ENCODE measurements at regions of chr2 and their contacts with region 1.

Region 1: GRCh38 chr2:188089901-188090300 is 201.8 kb upstream of the GULP1 start:
- DNase-seq: no peak
- ATAC-seq: no peak
- H3K4me3 ChIP-seq: no peak overlapping the region
- H3K27ac ChIP-seq: no peak overlapping the region
- H3K4me1 ChIP-seq: no peaks in the 10 kb centered on the region
- H3K27me3 ChIP-seq: no peaks in the 10 kb centered on the region
- CTCF ChIP-seq: no peak
- EP300 ChIP-seq: no peak
- POLR2A ChIP-seq: no peak
- RAD21 ChIP-seq: no peak

Region 2: GRCh38 chr2:188256420-188256819 is 166.5 kb after region 1 on chr2:
- CTCF ChIA-PET with region 1: no interaction called
- POLR2A ChIA-PET with region 1: no interaction called
- in situ Hi-C with region 1: loop called (anchors 5 kb)
- intact Hi-C with region 1: no loop called
- DNase-seq: no peak
- ATAC-seq: no peak
- H3K4me3 ChIP-seq: no peak overlapping the region
- H3K27ac ChIP-seq: no peak overlapping the region
- H3K4me1 ChIP-seq: no peaks in the 10 kb centered on the region
- H3K27me3 ChIP-seq: no peaks in the 10 kb centered on the region
- CTCF ChIP-seq: no peak
- EP300 ChIP-seq: no peak
- POLR2A ChIP-seq: no peak
- RAD21 ChIP-seq: no peak

Region 3: DNA sequence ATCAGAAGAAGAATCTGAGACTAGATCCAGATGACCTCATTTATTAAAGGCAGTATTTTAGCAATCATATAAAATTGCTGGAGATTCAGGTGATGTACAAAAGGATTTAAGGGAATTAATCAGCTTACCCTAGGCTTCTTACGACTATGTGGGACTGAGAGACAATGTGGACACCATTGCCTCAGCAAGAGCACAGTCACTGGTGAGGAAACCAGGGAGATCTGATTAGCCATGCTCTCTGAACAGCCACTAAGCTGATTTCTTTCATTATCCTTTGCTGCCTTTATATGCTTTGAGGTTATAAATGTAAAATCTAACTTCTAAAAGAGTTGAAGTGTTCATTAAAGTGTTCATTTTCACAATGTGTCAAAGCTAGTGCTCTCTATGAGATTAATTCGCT is 179.1 kb after region 1 on chr2:
- CTCF ChIA-PET with region 1: no interaction called
- POLR2A ChIA-PET with region 1: no interaction called
- in situ Hi-C with region 1: loop called (anchors 5 kb)
- intact Hi-C with region 1: loop called (anchors 1 kb)
- DNase-seq: no peak
- ATAC-seq: no peak
- H3K4me3 ChIP-seq: no peak overlapping the region
- H3K27ac ChIP-seq: no peak overlapping the region
- H3K4me1 ChIP-seq: no peaks in the 10 kb centered on the region
- H3K27me3 ChIP-seq: no peaks in the 10 kb centered on the region
- CTCF ChIP-seq: no peak
- EP300 ChIP-seq: no peak
- POLR2A ChIP-seq: no peak
- RAD21 ChIP-seq: no peak

Measured in HepG2 (cell line).